H1 (cell line): ENCODE measurements at regions of chr19 and their contacts with region 1.

Region 1: GRCh38 chr19:55653758-55654539 is 886 bp upstream of the U2AF2 start:
- DNase-seq: peak; percentile 98 to 100
- H3K4me3 ChIP-seq: peak overlapping the region; percentile 77 to 91 (median 82)
- H3K27ac ChIP-seq: peak overlapping the region; percentile 98
- H3K4me1 ChIP-seq: peaks cover 3 to 18% (median 10%) of the 10 kb centered on the region in 4 experiments; a peak in 6 of 7 replicates
- H3K27me3 ChIP-seq: no peaks in the 10 kb centered on the region
- CTCF ChIP-seq: peak; percentile 100
- EP300 ChIP-seq: no peak
- POLR2A ChIP-seq: peak in 1 of 2 experiments; percentile 53; a peak in 2 of 3 replicates
- RAD21 ChIP-seq: peak; percentile 46 to 47

Region 2: GRCh38 chr19:55536951-55537740 is 116.8 kb before region 1 on chr19 and contains the start of gene SBK2:
- CTCF ChIA-PET with region 1: no interaction called
- POLR2A ChIA-PET with region 1: no interaction called
- DNase-seq: peak; percentile 62 to 98
- H3K4me3 ChIP-seq: peak within 1 kb of the TSS; percentile 12 to 58 (median 29); a peak in 5 of 8 replicates
- H3K27ac ChIP-seq: peak within 1 kb of the TSS; percentile 51; the same call in 1 of the 2 replicates
- H3K4me1 ChIP-seq: peaks cover 0 to 17% (median 5%) of the 10 kb centered on the region in 4 experiments; a peak in 4 of 7 replicates
- H3K27me3 ChIP-seq: no peaks in the 10 kb centered on the region; a peak in 2 of 7 replicates
- CTCF ChIP-seq: peak; percentile 75 to 88 (median 84)
- EP300 ChIP-seq: no peak
- POLR2A ChIP-seq: 0 out of 3 replicates have a peak, but pooled peaks of 1 of the 2 experiments have one; percentile 21
- RAD21 ChIP-seq: peak; percentile 86 to 88
- total RNA-seq, gene SBK2: 3.9 and 4.1 TPM in 2 replicates

Region 3: GRCh38 chr19:55643348-55644176 is 10.4 kb before region 1 on chr19 and contains the start of gene ZNF581:
- CTCF ChIA-PET with region 1: interaction called, 30 read pairs
- POLR2A ChIA-PET with region 1: interaction called, 16 read pairs
- DNase-seq: peak in 1 of 2 experiments; percentile 90
- H3K4me3 ChIP-seq: peak within 1 kb of the TSS; percentile 74 to 98 (median 88)
- H3K27ac ChIP-seq: peak within 1 kb of the TSS; percentile 48
- H3K4me1 ChIP-seq: peaks cover 0 to 22% (median 11%) of the 10 kb centered on the region in 4 experiments; a peak in 6 of 7 replicates
- H3K27me3 ChIP-seq: no peaks in the 10 kb centered on the region
- CTCF ChIP-seq: no peak
- EP300 ChIP-seq: peak in 1 of 2 experiments; percentile 56; a peak in 1 of 3 replicates
- POLR2A ChIP-seq: peak in 1 of 2 experiments; percentile 13; a peak in 2 of 3 replicates
- RAD21 ChIP-seq: no peak
- total RNA-seq, gene ZNF581: 73.0 and 76.0 TPM in 2 replicates

Region 4: DNA sequence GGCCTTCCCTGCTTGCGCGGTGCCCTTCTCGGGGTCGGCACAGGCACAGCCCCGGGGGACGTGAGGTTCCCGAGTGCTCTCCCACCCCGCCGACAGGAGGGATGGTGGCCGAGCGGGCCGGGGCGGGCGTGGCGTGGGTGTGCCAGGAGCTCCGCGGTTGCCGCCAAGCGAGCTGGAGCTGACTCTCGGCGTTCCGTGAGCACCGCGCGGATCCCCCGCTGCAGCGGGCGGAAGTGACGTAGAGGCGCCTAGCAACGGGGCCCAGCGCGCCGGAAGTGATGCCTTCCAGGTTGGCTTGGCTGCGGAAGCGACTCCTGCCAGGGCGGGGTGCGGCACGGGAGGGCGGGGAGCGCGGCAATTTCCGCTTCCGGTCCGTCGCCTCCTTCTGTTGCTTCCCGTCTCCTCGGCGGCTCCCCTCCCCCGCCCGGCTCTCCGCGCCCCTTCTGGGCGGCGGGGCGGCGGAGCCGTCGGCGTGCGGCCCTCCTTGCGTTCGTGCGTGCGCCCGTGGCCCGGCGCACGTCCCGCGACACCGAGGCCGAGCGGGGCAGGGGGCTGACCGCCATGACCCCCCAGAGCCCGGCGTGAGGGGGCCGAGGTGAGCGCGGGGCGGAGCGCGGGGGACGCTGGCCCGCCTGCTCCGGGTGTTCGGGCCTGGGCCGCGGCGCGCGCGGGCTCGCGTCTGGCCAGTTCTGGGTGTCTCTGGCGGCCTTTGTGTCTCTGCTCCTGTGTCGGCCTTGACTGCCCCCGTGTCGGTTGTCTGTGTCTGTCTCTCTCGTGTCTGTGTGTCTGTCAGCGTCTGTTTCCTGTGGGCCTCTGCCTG is 21.1 kb after region 1 on chr19 and contains the start of gene EPN1:
- CTCF ChIA-PET with region 1: interaction called, 19 read pairs
- POLR2A ChIA-PET with region 1: interaction called, 75 read pairs
- DNase-seq: peak; percentile 81 to 98
- H3K4me3 ChIP-seq: peak within 1 kb of the TSS; percentile 83 to 95 (median 92)
- H3K27ac ChIP-seq: peak within 1 kb of the TSS; percentile 68; the same call in 1 of the 2 replicates
- H3K4me1 ChIP-seq: peaks cover 0 to 11% (median 6%) of the 10 kb centered on the region in 4 experiments; a peak in 5 of 7 replicates
- H3K27me3 ChIP-seq: no peaks in the 10 kb centered on the region
- CTCF ChIP-seq: no peak
- EP300 ChIP-seq: no peak
- POLR2A ChIP-seq: peak; percentile 5 to 80
- RAD21 ChIP-seq: no peak
- total RNA-seq, gene EPN1: 200 and 206 TPM in 2 replicates